HepG2 (cell line): ENCODE measurements at regions of chr6 and their contacts with region 1.

Region 1: GRCh38 chr6:47646567-47647088 is 51.8 kb upstream of the ADGRF4 start:
- DNase-seq: no peak
- ATAC-seq: no peak
- H3K4me3 ChIP-seq: no peak overlapping the region
- H3K27ac ChIP-seq: no peak overlapping the region
- H3K4me1 ChIP-seq: no peaks in the 10 kb centered on the region
- H3K27me3 ChIP-seq: peaks cover 0 to 15% of the 10 kb centered on the region in 2 experiments; a peak in 2 of 5 replicates
- CTCF ChIP-seq: no peak
- EP300 ChIP-seq: no peak
- POLR2A ChIP-seq: no peak
- RAD21 ChIP-seq: no peak

Region 2: DNA sequence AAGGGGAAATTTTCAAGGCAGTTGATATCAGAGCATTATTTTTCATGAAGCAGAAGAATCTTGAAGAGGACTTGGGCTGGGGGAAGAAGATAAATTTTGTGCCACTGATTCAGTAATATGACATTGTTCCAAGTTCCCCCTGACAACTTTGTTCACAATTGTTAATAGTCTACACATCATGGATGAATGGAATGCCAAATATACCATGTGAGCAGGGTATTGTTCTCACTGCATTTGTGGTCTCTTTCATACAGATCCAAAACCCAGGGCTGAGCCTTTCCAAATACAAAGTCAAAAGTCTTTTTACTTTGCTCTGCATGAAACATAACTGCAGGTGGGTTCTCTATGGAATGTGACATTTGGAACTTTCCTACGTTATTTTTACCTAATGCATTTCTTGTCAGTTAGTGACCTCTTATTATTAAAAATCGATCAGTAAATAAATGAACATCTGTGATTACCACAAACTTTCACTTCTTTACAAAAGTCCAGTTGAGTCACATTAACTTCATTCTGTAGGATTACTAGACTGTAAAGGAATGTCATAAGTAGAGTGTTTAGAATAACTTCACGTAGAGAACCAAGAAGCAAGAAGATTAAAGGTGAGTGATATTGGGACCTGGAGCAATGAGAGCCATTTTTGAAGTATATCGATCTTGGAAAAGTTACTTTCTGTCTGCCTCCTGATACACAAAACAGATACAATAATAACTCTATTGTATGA is 1256.3 kb before region 1 on chr6:
- CTCF ChIA-PET with region 1: no interaction called
- POLR2A ChIA-PET with region 1: no interaction called
- in situ Hi-C with region 1: no loop called
- intact Hi-C with region 1: loop called (anchors 5 kb)
- DNase-seq: no peak
- ATAC-seq: no peak
- H3K4me3 ChIP-seq: no peak overlapping the region
- H3K27ac ChIP-seq: no peak overlapping the region
- H3K4me1 ChIP-seq: no peaks in the 10 kb centered on the region
- H3K27me3 ChIP-seq: no peaks in the 10 kb centered on the region
- CTCF ChIP-seq: no peak
- EP300 ChIP-seq: no peak
- POLR2A ChIP-seq: no peak
- RAD21 ChIP-seq: no peak

Region 3: GRCh38 chr6:47631269-47631772 is 15.3 kb before region 1 on chr6:
- CTCF ChIA-PET with region 1: no interaction called
- POLR2A ChIA-PET with region 1: no interaction called
- in situ Hi-C with region 1: no loop called
- intact Hi-C with region 1: no loop called
- DNase-seq: peak; percentile 66
- ATAC-seq: peak; percentile 59
- H3K4me3 ChIP-seq: peak overlapping the region in 2 of 3 experiments; percentile 5 to 42; a peak in 3 of 6 replicates
- H3K27ac ChIP-seq: no peak overlapping the region
- H3K4me1 ChIP-seq: peaks cover 31% of the 10 kb centered on the region
- H3K27me3 ChIP-seq: 0 out of 5 replicates have a peak, but pooled peaks cover 0 to 4% of the 10 kb centered on the region in 2 experiments
- CTCF ChIP-seq: peak; percentile 73
- EP300 ChIP-seq: no peak
- POLR2A ChIP-seq: no peak
- RAD21 ChIP-seq: peak; percentile 68; the same call in 1 of the 2 replicates